ENCODE measurements at regions of chr11 and their contacts with region 1.

Region 1: GRCh38 chr11:33808228-33808828 is 34.0 kb upstream of the FBXO3 start:
- DNase-seq: peak; percentile 92
- ATAC-seq: peak; percentile 92
- H3K4me3 Mint-ChIP-seq: no peak overlapping the region
- H3K27ac Mint-ChIP-seq: no peak overlapping the region
- H3K4me1 Mint-ChIP-seq: peaks cover 2% of the 10 kb centered on the region
- H3K27me3 Mint-ChIP-seq: peaks cover 9% of the 10 kb centered on the region
- CTCF ChIP-seq: peak; percentile 88

Region 2: DNA sequence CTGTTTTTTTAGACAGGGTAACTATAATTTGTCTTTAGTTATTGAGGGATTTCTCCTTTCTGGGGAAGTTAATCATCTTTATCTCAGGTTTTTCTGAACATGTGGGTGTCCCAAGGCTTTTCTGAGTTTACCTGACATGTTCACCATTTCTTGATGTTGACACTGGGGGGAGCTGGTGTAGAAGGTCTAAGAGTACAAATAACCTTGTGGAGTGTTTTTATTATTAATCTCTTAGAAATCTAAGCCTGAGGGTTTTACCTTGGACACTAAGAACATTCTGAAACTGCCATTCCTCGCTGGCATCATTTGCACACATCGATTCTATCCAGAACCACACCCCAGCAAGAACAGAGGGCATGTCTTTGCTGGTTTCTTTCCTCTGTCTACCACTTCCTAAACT is 92.1 kb before region 1 on chr11:
- CTCF ChIA-PET with region 1: interaction called, 22 read pairs
- POLR2A ChIA-PET with region 1: no interaction called
- intact Hi-C with region 1: no loop called
- DNase-seq: peak; percentile 53
- ATAC-seq: peak; percentile 66
- H3K4me3 Mint-ChIP-seq: no peak overlapping the region
- H3K27ac Mint-ChIP-seq: no peak overlapping the region
- H3K4me1 Mint-ChIP-seq: peaks cover under 1% of the 10 kb centered on the region
- H3K27me3 Mint-ChIP-seq: no peaks in the 10 kb centered on the region
- CTCF ChIP-seq: peak; percentile 21

Region 3: DNA sequence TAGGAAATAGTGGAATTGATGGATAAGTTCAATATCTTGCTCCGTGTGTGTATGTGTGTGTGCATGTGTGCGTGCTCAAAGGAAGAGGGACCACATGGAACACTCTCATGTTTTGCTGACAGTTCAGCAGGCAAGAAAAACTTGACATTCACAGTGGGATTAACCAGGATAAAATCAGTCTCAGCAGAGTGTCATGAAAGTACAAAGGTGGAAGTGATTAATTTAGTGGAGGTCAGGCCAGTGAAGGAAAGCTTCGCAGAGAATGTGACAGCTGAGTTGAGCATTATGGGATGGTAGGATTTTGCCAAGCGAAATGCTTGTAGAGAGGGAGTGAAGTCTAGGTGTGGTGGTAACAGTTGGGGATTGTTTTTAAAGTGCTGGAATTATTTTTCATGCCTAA is 18.3 kb before region 1 on chr11:
- CTCF ChIA-PET with region 1: interaction called, 37 read pairs
- POLR2A ChIA-PET with region 1: no interaction called
- intact Hi-C with region 1: no loop called
- DNase-seq: no peak
- ATAC-seq: no peak
- H3K4me3 Mint-ChIP-seq: no peak overlapping the region
- H3K27ac Mint-ChIP-seq: no peak overlapping the region
- H3K4me1 Mint-ChIP-seq: peaks cover 3% of the 10 kb centered on the region
- H3K27me3 Mint-ChIP-seq: peaks cover 38% of the 10 kb centered on the region
- CTCF ChIP-seq: no peak

Region 4: GRCh38 chr11:33819278-33819677 is 10.9 kb after region 1 on chr11:
- CTCF ChIA-PET with region 1: interaction called, 18 read pairs
- POLR2A ChIA-PET with region 1: no interaction called
- intact Hi-C with region 1: no loop called
- DNase-seq: no peak
- ATAC-seq: no peak
- H3K4me3 Mint-ChIP-seq: no peak overlapping the region
- H3K27ac Mint-ChIP-seq: no peak overlapping the region
- H3K4me1 Mint-ChIP-seq: no peaks in the 10 kb centered on the region
- H3K27me3 Mint-ChIP-seq: peaks cover 18% of the 10 kb centered on the region
- CTCF ChIP-seq: no peak

Region 5: DNA sequence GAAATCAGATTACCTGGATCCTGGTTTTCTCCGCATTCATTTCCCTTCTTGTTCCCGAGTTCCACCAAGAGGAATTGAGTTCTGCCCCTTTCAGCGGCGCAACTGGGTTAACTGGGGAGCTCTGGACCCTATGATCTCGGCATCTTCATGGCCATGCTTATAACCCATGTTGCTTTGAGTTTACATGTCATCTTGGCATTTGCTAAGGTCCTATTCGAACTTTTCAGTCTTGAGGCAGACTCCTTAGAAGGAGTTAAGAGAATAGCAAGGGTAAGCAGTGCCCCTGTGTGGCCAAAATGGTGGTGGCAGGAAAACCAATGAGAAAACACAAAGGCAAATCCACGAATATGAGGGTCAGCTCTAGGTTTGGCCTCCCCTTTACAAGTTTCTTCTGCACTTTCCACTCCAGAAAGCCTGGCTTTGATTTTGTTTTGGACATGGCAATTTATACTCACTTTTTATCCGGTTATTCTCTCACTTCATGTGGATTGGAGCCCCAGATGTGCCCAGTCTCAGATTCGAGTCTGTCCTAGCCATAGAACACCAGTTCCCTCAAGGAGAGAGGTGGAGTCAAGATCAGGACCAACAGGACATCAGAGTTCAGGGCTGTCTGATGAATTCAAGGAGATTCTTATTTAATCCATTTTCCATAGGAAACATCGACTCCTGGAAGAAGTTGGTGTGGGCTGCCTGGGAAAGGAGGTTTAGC is 21.3 kb after region 1 on chr11:
- CTCF ChIA-PET with region 1: interaction called, 132 read pairs
- POLR2A ChIA-PET with region 1: interaction called, 4 read pairs
- intact Hi-C with region 1: no loop called
- DNase-seq: peak; percentile 84
- ATAC-seq: peak; percentile 84
- H3K4me3 Mint-ChIP-seq: peak overlapping the region; percentile 55
- H3K27ac Mint-ChIP-seq: no peak overlapping the region
- H3K4me1 Mint-ChIP-seq: peaks cover 6% of the 10 kb centered on the region
- H3K27me3 Mint-ChIP-seq: peaks cover 41% of the 10 kb centered on the region
- CTCF ChIP-seq: peak; percentile 71

Region 6: DNA sequence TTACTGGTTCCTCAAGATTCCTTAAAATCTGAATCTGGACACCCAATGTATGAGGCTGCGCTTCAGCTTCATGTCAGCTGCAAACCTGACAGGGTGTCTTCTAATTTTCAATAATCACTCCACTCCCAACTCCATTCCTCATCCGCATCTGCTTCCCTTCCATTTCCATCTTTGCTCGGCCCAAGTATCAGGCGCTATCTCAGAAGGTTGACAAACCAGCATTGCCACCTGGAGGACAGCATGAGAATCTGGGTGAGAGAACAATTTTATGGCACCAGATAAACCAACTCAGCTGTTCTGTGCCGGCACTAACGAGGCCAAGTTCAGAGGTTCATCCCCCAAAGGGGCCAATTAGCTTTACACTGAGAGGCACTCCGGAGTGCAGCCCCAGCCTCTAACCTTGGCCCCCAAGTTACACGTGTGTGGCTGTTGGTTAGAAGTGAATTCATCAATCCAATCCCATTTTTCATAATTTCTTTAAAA is 162.7 kb after region 1 on chr11:
- CTCF ChIA-PET with region 1: interaction called, 14 read pairs
- POLR2A ChIA-PET with region 1: no interaction called
- intact Hi-C with region 1: no loop called
- DNase-seq: peak; percentile 37
- ATAC-seq: peak; percentile 53
- H3K4me3 Mint-ChIP-seq: no peak overlapping the region
- H3K27ac Mint-ChIP-seq: no peak overlapping the region
- H3K4me1 Mint-ChIP-seq: no peaks in the 10 kb centered on the region
- H3K27me3 Mint-ChIP-seq: peaks cover 11% of the 10 kb centered on the region
- CTCF ChIP-seq: peak; percentile 54

Measured in activated CD8-positive, alpha-beta T cell treated with anti-CD3 and anti-CD28 coated beads for 36 hours (primary cell).